WTC11 (cell line): ENCODE measurements at regions of chr19 and their contacts with region 1.

Region 1: DNA sequence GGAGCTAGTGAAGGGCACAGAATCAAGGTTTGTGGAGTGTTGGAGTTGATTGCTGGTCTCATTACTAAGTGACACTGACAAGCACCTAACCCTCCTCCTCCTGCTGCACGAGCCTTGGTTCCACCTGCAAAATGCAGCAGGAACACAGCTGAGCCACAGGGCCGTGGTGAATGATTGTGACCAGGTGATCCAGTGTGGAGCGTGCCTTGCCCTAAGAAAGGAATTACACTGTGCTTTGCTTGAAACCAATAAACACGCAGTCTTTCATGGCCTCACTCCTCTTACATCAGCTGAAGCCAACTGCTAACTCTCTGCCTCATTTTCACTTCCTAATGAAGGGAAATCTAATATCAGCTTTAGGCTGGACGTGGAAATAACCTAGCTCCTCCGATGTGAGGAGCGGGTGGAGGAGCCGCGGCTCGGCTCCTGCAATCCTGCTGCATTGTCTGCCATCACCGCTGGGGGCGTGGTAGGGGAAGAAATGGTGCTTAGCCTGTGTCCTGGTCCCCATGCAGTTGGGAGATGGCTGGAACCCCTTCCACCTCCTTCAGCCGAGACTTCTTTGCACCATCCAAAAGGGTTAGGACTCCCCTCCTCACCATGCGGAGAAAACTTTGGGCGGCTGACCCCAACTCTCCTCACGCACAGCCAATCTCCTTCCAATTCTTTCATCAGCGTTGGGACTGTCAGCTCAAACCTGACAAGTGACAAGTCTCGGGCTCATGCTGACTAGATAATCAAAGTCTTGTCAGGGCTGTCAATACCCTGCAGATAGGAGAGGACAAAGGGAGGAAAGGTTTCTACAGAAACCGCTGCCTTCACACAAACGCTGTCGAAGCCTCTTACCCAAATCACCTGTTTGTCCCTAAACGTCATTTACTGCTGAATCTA is 427.9 kb downstream of the ZNF536 start:
- DNase-seq: peak; percentile 87
- ATAC-seq: peak; percentile 94
- H3K4me3 Mint-ChIP-seq: no peak overlapping the region
- H3K27ac Mint-ChIP-seq: no peak overlapping the region
- H3K4me1 Mint-ChIP-seq: peaks cover 27% of the 10 kb centered on the region
- H3K27me3 Mint-ChIP-seq: peaks cover 15% of the 10 kb centered on the region
- CTCF ChIP-seq: peak; percentile 75

Region 2: GRCh38 chr19:30682999-30683536 is 117.0 kb before region 1 on chr19:
- CTCF ChIA-PET with region 1: interaction called, 12 read pairs
- POLR2A ChIA-PET with region 1: no interaction called
- DNase-seq: peak; percentile 78
- ATAC-seq: peak; percentile 58
- H3K4me3 Mint-ChIP-seq: no peak overlapping the region
- H3K27ac Mint-ChIP-seq: no peak overlapping the region
- H3K4me1 Mint-ChIP-seq: peaks cover 35% of the 10 kb centered on the region
- H3K27me3 Mint-ChIP-seq: no peaks in the 10 kb centered on the region
- CTCF ChIP-seq: peak; percentile 80

Region 3: DNA sequence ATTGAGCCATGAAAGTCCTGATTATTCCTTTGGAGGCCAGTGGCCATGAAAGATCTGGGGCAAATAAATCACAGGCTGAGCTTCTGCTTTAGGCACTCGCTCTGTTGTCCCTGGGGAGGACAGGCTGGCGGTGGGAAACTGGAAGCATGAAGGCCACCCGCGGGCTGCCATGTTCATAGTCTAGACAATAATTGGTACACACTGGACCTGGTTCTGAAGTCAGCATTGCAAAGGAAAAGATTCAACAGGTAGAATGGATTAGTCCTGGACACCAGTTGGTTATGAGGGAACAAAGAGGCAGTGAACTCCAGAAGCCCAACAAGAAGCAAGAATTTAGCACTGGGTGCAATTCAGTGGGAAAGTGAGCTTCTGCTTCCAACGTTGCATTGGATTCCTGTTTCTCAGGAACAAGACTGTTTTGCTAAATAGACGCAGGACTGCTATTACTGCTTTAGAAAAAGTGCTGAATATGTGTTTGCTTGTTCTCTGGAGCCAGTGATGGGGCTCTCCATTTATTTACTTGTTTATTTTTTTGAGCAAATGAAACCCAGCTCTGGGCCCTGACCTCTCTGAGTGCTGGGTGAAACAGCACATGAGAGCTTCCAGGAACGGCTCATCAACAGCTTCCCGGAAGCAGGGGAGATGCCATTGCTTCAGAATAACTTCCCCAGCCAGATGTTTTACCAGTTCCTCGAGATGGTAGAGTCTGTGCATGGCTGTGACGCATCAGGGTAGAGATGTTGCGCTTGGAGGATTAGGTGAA is 91.5 kb before region 1 on chr19:
- CTCF ChIA-PET with region 1: no interaction called
- POLR2A ChIA-PET with region 1: no interaction called
- DNase-seq: no peak
- ATAC-seq: no peak
- H3K4me3 Mint-ChIP-seq: no peak overlapping the region
- H3K27ac Mint-ChIP-seq: no peak overlapping the region
- H3K4me1 Mint-ChIP-seq: peaks cover 17% of the 10 kb centered on the region
- H3K27me3 Mint-ChIP-seq: no peaks in the 10 kb centered on the region
- CTCF ChIP-seq: no peak

Region 4: DNA sequence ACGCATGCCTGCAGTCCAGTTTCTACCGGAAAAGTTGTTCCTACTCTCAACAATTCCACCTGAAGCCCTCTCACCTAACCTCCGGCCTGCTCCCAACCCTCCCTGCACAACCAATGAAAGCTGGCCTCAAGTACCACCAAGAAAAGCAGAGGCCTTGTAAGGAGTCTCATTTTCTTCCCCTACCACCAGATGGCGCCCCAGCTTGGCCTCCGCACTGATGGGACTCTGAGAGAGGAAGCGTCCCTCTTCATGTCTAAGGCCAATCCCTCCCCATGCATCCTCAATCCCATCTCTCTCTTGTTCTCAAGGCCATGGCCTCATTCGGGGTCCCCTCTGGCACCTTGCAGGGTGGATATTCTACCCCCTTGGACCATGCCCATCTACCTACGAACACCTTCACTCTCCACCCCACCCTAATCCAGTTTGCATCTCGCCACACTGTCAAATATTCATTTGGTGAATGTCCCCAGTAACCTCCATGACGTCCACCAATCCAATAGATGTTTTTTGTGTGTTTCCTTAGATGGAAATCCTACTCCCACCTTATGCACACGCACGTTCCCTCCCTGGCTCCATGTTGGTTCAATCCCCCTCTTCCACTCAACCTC is 15.2 kb before region 1 on chr19:
- CTCF ChIA-PET with region 1: interaction called, 24 read pairs
- POLR2A ChIA-PET with region 1: no interaction called
- DNase-seq: peak; percentile 84
- ATAC-seq: peak; percentile 97
- H3K4me3 Mint-ChIP-seq: no peak overlapping the region
- H3K27ac Mint-ChIP-seq: no peak overlapping the region
- H3K4me1 Mint-ChIP-seq: no peaks in the 10 kb centered on the region
- H3K27me3 Mint-ChIP-seq: no peaks in the 10 kb centered on the region; the same call in 1 of the 2 replicates
- CTCF ChIP-seq: peak; percentile 63

Region 5: DNA sequence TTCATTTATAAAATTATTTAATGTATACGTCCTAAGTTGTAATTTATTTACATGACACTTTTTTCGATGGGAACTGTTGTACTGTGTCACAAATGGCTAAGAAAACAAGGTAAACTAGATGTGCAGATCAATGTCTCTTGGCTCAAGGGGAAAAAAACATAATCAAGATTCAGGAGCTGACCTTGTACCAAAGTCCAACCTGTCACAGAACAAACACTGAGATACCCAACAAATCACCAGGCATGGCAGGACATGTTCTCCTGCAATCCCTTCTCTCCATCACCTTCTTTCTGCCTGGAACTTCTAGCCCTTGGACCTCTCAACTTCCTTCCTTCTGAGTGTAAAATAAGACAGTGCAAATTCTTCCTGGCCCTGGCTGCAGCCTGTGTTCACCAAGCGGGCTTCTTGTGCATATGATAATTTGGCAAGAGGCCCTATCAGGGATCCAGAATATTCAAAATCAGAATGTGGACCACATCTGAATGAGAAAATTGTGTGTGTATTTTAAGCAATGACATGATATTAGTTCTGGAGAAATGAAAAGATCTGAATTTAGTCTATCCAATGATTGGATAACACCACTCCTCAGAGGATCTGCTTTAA is 18.0 kb after region 1 on chr19:
- CTCF ChIA-PET with region 1: interaction called, 11 read pairs
- POLR2A ChIA-PET with region 1: no interaction called
- DNase-seq: no peak
- ATAC-seq: no peak
- H3K4me3 Mint-ChIP-seq: no peak overlapping the region
- H3K27ac Mint-ChIP-seq: no peak overlapping the region
- H3K4me1 Mint-ChIP-seq: peaks cover 7% of the 10 kb centered on the region; the same call in 1 of the 2 replicates
- H3K27me3 Mint-ChIP-seq: no peaks in the 10 kb centered on the region; the same call in 1 of the 2 replicates
- CTCF ChIP-seq: no peak

Region 6: DNA sequence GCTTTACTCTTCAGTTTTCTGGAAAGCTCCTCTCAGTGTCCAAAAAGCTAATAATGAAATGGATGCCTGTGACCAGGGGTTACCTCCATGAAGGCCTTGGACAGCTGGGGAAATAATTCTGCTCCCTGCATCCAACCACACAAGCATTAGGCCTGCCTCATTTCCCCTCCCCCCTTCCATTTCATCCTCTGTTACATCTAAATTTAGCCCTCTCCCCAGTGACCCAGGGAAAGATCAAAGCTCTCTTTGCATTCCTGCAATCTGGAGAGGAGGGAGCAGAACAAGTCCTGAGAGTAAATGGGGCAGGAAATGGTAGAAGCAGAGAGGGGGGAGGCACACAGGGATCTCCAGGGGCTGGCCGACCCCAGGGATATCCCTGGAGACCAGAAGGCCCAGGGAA is 96.4 kb after region 1 on chr19:
- CTCF ChIA-PET with region 1: interaction called, 10 read pairs
- POLR2A ChIA-PET with region 1: no interaction called
- DNase-seq: no peak
- ATAC-seq: peak; percentile 61
- H3K4me3 Mint-ChIP-seq: peak overlapping the region; percentile 54
- H3K27ac Mint-ChIP-seq: peak overlapping the region; percentile 87
- H3K4me1 Mint-ChIP-seq: peaks cover 54% of the 10 kb centered on the region
- H3K27me3 Mint-ChIP-seq: no peaks in the 10 kb centered on the region; the same call in 1 of the 2 replicates
- CTCF ChIP-seq: no peak